ENCODE measurements at regions of chr13 and their contacts with region 1.

Region 1: GRCh38 chr13:93227878-93228642 is 1.5 kb downstream of the GPC6 start:
- DNase-seq: peak; percentile 69 to 82 (median 74)
- ATAC-seq: peak; percentile 79
- H3K4me3 ChIP-seq: peak overlapping the region; percentile 10
- H3K27ac ChIP-seq: no peak overlapping the region
- H3K4me1 ChIP-seq: peaks cover 0 to 19% of the 10 kb centered on the region in 2 experiments; a peak in 2 of 5 replicates
- H3K27me3 ChIP-seq: peaks cover 30 to 31% of the 10 kb centered on the region in 2 experiments; a peak in 4 of 5 replicates
- CTCF ChIP-seq: peak in 1 of 3 experiments; percentile 31; a peak in 2 of 6 replicates
- EP300 ChIP-seq: peak; percentile 11; the same call in 1 of the 2 replicates
- POLR2A ChIP-seq: no peak
- RAD21 ChIP-seq: no peak

Region 2: DNA sequence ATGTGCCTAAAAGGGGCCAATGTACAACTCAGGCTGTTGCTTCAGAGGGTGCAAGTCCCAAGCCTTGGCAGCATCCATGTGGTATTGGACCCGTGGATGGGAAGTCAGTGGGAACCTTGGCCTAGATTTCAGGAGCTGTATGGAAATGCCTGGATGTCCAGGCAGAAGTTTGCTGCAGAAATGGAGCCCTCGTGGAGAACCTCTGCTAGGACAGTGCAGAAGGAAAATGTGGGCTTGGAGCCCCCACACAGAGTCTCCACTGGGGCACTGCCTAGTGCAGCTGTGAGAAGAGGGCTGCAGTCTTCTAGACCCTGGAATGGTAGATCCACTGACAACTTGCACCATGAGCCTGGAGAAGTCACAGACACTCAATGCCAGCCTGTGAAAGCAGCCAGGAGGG is 1801.1 kb before region 1 on chr13:
- CTCF ChIA-PET with region 1: no interaction called
- POLR2A ChIA-PET with region 1: no interaction called
- in situ Hi-C with region 1: loop called (anchors 25 kb)
- intact Hi-C with region 1: no loop called
- DNase-seq: peak in 1 of 4 experiments; percentile 49
- ATAC-seq: no peak; the same call in 2 of the 3 replicates
- H3K4me3 ChIP-seq: no peak overlapping the region
- H3K27ac ChIP-seq: no peak overlapping the region
- H3K4me1 ChIP-seq: no peaks in the 10 kb centered on the region
- H3K27me3 ChIP-seq: no peaks in the 10 kb centered on the region
- CTCF ChIP-seq: no peak
- EP300 ChIP-seq: no peak
- POLR2A ChIP-seq: no peak
- RAD21 ChIP-seq: no peak

Region 3: DNA sequence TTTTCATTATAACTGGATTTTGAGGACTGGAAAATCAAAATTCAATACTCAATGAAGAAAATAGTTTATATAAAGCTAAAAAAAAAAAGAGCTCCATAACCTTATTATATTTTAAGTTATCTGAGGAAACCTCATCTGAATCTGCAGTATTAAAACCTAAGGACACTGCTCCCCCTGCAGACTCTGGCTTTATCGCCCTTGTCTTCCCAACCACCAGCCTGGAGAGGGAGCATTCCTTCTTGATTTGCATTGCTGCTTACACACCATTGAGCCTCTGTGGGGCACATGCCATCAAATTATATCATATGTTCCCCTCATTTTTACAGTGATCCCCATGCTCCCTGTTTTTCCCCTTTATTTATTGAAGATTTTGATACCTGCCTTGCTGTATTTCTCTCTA is 872.8 kb before region 1 on chr13:
- CTCF ChIA-PET with region 1: interaction called, 3 read pairs
- POLR2A ChIA-PET with region 1: no interaction called
- in situ Hi-C with region 1: no loop called
- intact Hi-C with region 1: loop called (anchors 5 kb)
- DNase-seq: peak; percentile 59 to 64 (median 63)
- ATAC-seq: peak; percentile 94
- H3K4me3 ChIP-seq: no peak overlapping the region
- H3K27ac ChIP-seq: no peak overlapping the region
- H3K4me1 ChIP-seq: no peaks in the 10 kb centered on the region
- H3K27me3 ChIP-seq: no peaks in the 10 kb centered on the region
- CTCF ChIP-seq: peak in 1 of 3 experiments; percentile 98; a peak in 2 of 6 replicates
- EP300 ChIP-seq: no peak
- POLR2A ChIP-seq: no peak
- RAD21 ChIP-seq: no peak

Measured in K562 (cell line).